CD8-positive, alpha-beta T cell (primary cell): ENCODE measurements at regions of chr20 and their contacts with region 1.

Region 1: DNA sequence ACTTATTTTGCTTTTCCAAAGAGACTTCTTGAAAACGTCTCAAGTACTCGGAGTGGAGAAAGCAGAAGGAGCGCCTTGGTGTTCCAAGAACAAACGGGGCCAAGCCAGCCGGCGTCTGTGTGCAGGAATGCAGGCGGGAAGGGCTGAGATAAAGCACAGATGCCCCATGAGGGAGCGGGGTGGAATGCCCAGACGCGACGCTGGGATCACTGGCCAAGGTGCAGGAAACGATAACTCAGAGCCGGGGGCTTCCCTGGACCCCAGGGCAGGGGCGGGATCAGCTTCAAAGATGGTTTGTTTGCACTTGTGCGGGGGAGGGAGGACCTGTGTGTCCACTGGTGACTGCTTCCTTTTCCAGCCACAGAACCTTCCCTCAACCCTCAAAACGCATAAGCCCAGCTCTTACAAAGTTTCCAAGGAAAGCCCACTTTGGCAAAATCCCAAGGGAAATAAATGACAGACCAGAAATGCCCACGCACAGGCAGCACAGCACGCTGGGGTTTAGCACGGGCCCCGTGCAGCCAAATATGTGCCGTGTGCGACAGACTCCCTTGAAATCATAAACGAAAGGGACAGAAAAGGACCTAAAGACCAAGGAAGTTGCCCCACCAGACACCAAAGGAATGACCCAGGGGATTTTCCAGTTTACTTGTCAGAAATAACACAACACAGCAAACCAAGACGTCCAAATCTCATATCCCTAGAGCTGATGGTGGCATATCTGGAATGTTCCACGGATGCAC is 113.9 kb downstream of the NFATC2 start:
- DNase-seq: no peak
- ATAC-seq: no peak
- H3K4me3 ChIP-seq: no peak overlapping the region
- H3K4me3 Mint-ChIP-seq: no peak overlapping the region
- H3K27ac ChIP-seq: no peak overlapping the region
- H3K27ac Mint-ChIP-seq: no peak overlapping the region
- H3K4me1 ChIP-seq: peaks cover 37% of the 10 kb centered on the region
- H3K4me1 Mint-ChIP-seq: peaks cover 64% of the 10 kb centered on the region
- H3K27me3 ChIP-seq: no peaks in the 10 kb centered on the region
- H3K27me3 Mint-ChIP-seq: no peaks in the 10 kb centered on the region
- CTCF ChIP-seq: no peak

Region 2: DNA sequence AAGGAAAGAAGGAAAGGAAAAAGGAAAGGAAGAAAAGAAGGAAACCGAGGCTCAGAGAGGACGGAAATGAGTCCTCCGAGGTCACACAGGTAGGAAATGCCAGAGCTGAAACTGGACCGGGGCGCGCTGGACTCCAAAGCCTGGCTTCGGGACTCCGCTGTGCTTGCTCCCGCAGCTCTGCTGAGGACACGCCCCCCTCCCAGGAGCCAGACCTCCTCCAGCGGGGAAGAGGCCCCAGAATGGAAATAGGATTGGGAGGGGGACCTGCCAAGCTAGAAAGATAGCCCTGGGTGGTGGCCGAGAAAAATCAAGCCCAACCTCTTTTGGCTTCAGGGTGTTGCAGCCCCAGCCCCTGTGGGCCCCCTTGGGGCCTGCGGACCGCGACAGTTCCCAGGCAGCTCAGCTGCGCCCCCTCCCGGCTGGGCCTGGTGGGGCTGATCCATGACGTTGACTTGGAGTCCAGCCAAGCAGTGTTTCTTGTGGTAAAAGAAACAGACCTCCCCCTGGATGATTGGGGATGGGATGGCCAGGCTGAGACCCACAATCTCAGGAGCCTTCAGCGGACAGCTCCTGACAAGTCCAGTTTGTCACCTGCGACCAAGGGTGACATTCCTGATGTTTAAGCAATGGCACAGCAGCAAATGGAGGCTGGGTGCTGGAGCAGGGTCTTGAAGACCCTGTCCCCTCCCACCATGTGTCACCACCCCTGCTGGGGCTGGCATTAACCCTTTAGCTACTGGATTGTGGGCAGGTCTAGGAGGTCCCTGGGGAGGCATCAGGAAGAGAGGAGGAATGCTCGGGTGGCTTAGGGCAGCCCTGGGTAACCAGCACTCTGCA is 792.7 kb before region 1 on chr20:
- CTCF ChIA-PET with region 1: no interaction called
- POLR2A ChIA-PET with region 1: no interaction called
- intact Hi-C with region 1: no loop called
- DNase-seq: peak; percentile 6 to 59 (median 40)
- ATAC-seq: peak; percentile 61
- H3K4me3 ChIP-seq: no peak overlapping the region
- H3K4me3 Mint-ChIP-seq: no peak overlapping the region
- H3K27ac ChIP-seq: no peak overlapping the region
- H3K27ac Mint-ChIP-seq: no peak overlapping the region
- H3K4me1 ChIP-seq: no peaks in the 10 kb centered on the region
- H3K4me1 Mint-ChIP-seq: no peaks in the 10 kb centered on the region
- H3K27me3 ChIP-seq: no peaks in the 10 kb centered on the region
- H3K27me3 Mint-ChIP-seq: peaks cover 2% of the 10 kb centered on the region
- CTCF ChIP-seq: peak; percentile 45

Region 3: GRCh38 chr20:51095633-51096513 is 332.7 kb before region 1 on chr20:
- CTCF ChIA-PET with region 1: no interaction called
- POLR2A ChIA-PET with region 1: no interaction called
- intact Hi-C with region 1: no loop called
- DNase-seq: no peak
- ATAC-seq: no peak
- H3K4me3 ChIP-seq: no peak overlapping the region
- H3K4me3 Mint-ChIP-seq: no peak overlapping the region
- H3K27ac ChIP-seq: no peak overlapping the region
- H3K27ac Mint-ChIP-seq: no peak overlapping the region
- H3K4me1 ChIP-seq: no peaks in the 10 kb centered on the region
- H3K4me1 Mint-ChIP-seq: peaks cover 5% of the 10 kb centered on the region
- H3K27me3 ChIP-seq: no peaks in the 10 kb centered on the region
- H3K27me3 Mint-ChIP-seq: peaks cover 47% of the 10 kb centered on the region
- CTCF ChIP-seq: no peak

Region 4: GRCh38 chr20:51412333-51412871 is 16.2 kb before region 1 on chr20:
- CTCF ChIA-PET with region 1: no interaction called
- POLR2A ChIA-PET with region 1: no interaction called
- intact Hi-C with region 1: no loop called
- DNase-seq: no peak
- ATAC-seq: no peak
- H3K4me3 ChIP-seq: no peak overlapping the region
- H3K4me3 Mint-ChIP-seq: no peak overlapping the region
- H3K27ac ChIP-seq: peak overlapping the region in 1 of 2 experiments; percentile 47
- H3K27ac Mint-ChIP-seq: peak overlapping the region; percentile 75
- H3K4me1 ChIP-seq: peaks cover 26% of the 10 kb centered on the region
- H3K4me1 Mint-ChIP-seq: peaks cover 56% of the 10 kb centered on the region
- H3K27me3 ChIP-seq: no peaks in the 10 kb centered on the region
- H3K27me3 Mint-ChIP-seq: no peaks in the 10 kb centered on the region
- CTCF ChIP-seq: no peak

Region 5: DNA sequence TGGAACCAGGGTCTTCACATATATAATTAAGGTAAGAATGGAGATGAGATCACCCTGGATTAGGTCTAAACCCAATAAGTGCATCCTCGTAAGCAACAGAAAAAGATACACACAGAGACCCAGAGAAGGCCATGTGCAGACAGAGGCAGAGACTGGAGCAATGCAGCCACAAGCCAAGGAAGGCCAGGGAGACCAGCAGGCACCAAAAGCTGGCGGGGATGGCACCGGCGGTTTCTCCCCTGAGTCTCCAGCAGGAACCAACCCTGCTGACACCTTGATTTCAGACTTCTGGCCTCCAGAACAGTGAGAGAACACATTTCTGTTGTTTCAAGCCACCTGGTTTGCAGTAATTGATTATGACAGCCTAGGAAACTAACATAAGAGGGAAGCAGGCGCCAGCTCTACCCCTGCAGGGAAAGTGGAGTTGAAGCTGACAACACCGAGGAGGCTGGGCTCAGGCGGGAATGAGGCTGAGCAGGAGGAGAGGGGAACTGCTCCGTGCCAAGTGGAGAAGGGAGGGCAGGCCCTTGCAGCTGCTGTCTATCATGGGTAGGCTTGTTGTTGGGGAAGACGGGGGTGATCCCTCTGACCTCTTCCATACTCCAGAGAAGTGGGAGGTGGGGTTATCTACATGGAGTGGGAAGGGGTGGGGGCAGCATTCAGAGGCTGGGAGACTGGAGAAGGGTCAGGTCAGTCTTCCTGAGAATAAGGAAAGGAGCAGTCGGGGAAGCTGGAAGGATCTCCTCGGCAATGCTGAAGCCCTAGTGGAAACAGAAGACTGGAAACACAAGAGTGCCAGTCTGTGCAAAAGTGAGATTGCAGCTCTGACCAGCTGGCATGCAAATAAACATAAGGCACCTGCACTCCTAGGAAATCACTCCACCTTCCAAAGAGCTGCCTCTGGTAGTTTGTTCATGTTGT is 41.3 kb after region 1 on chr20:
- CTCF ChIA-PET with region 1: no interaction called
- POLR2A ChIA-PET with region 1: no interaction called
- intact Hi-C with region 1: loop called in 1 of 2 experiments (anchors 10 kb)
- DNase-seq: no peak
- ATAC-seq: no peak
- H3K4me3 ChIP-seq: no peak overlapping the region
- H3K4me3 Mint-ChIP-seq: peak overlapping the region; percentile 5
- H3K27ac ChIP-seq: peak overlapping the region in 1 of 2 experiments; percentile 20
- H3K27ac Mint-ChIP-seq: peak overlapping the region; percentile 83
- H3K4me1 ChIP-seq: peaks cover 17% of the 10 kb centered on the region
- H3K4me1 Mint-ChIP-seq: peaks cover 35% of the 10 kb centered on the region
- H3K27me3 ChIP-seq: no peaks in the 10 kb centered on the region
- H3K27me3 Mint-ChIP-seq: no peaks in the 10 kb centered on the region
- CTCF ChIP-seq: no peak

Region 6: DNA sequence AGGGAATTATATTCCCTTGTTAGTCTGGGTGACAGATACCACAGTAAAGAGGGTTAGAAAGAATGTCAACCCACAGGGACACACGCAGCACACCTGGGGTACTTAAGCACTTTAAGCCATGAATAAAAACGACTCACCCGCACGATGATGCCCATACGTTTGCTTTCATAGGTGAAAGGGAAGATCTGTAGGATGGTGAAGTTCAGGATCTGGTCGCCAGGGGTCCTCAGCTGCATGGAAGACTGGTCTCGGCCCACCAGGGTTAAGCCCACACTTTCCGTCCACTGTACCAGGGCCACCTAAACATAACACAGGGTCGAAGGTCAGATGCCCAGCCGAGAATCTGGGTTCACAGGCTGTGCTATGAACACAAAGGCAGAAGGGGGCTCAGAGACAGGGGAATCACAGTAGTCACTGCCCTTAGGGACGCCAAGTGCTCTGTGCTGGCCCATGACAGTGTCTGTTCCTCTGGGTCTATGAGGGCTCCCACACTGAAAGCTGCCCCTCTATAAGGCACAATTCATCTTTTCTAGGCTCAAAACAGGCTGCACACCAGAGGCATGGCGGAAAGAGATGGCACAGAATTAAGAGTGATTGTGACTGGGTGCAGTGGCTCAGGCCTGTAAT is 210.7 kb after region 1 on chr20:
- CTCF ChIA-PET with region 1: no interaction called
- POLR2A ChIA-PET with region 1: no interaction called
- intact Hi-C with region 1: no loop called
- DNase-seq: peak; percentile 15 to 75 (median 50)
- ATAC-seq: peak; percentile 44
- H3K4me3 ChIP-seq: no peak overlapping the region
- H3K4me3 Mint-ChIP-seq: no peak overlapping the region
- H3K27ac ChIP-seq: no peak overlapping the region
- H3K27ac Mint-ChIP-seq: no peak overlapping the region
- H3K4me1 ChIP-seq: no peaks in the 10 kb centered on the region
- H3K4me1 Mint-ChIP-seq: no peaks in the 10 kb centered on the region
- H3K27me3 ChIP-seq: no peaks in the 10 kb centered on the region
- H3K27me3 Mint-ChIP-seq: peaks cover 3% of the 10 kb centered on the region
- CTCF ChIP-seq: peak; percentile 59